ENCODE measurements at regions of chr22 and their contacts with region 1.

Region 1: DNA sequence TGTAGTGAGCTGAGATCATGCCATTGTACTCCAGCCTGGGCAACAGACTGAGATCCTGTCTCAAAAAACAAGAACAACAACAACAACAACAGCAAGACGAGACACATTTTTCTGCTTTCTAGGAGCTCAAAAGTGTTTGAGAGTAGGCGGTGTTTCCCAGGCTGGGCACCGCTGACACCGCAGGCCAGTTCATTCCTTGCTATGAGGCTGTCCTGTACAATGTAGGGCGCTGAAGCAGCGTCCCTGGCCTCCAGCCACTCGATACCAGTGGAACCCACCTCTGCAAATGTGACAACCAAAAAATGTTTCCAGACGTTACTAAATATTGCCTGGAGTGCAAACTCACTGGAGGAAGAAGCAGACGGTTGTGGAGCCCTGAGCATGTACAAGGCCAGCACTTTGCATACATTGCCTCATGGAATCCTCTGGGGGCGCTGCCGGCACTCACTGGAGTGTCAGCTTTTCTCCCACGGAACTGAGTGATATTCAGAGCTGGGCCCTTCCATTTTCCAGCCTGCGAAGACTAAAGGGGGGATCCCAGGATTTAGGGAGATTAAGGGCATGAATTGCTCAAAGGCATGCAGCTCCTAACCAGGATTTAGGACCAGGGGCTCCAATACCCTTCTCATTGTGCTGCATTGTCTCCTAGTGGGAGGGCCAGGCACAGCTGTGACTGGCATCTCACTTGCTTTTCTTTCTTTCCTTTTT is 5.8 kb upstream of the MIEF1 start:
- DNase-seq: peak in 1 of 2 donors; percentile 65
- ATAC-seq: peak in 1 of 2 donors; percentile 79
- H3K4me3 ChIP-seq: no peak overlapping the region
- H3K27ac ChIP-seq: peak overlapping the region in 2 of 4 donors; percentile 41 to 48
- H3K4me1 ChIP-seq: peaks cover 3 to 27% of the 10 kb centered on the region in 2 donors
- H3K27me3 ChIP-seq: no peaks in the 10 kb centered on the region
- CTCF ChIP-seq: peak; percentile 41 to 77 (median 59)
- POLR2A ChIP-seq: no peak

Region 2: DNA sequence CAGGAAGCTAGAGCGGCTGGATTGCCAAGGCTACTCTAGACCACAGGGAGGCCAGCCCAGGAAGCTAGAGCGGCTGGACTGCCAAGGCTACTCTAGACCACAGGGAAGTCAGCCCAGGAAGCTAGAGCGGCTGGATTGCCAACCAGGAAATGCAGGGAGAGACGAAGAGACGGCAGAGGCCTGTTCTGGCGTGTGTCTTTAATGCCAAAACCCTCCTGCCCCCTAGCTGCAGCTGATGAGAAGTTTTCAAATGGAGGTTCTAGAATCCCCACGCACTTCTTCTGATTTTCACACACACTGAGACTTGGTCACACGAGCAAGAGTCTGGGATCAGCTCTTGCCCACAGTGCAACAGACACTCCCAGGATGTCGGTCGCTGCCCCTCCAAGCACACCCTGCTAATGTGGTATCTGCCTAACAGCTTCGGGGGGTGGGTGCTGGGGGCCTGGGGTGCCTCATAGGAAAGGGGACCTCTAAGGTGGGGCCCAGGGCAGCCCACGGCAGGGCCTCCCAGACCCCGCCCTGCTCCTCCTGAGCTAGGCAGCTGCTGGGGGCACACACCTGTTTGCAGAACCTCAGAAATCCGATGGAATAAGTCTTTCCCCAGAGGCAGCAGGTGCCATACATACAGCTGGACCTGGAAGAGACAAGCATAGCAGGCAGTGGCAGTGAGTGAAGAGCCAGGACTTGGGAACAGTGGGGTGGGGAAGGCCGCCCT is 1266.0 kb before region 1 on chr22:
- in situ Hi-C with region 1: no loop called
- intact Hi-C with region 1: loop called (anchors 5 kb)
- DNase-seq: no peak
- ATAC-seq: peak in 1 of 2 donors; percentile 16
- H3K4me3 ChIP-seq: no peak overlapping the region
- H3K27ac ChIP-seq: peak overlapping the region; percentile 5 to 66 (median 60)
- H3K4me1 ChIP-seq: peaks cover 28 to 38% of the 10 kb centered on the region in 2 donors
- H3K27me3 ChIP-seq: no peaks in the 10 kb centered on the region
- CTCF ChIP-seq: peak in 3 of 5 experiments; percentile 29 to 34 (median 31)
- POLR2A ChIP-seq: no peak

Region 3: DNA sequence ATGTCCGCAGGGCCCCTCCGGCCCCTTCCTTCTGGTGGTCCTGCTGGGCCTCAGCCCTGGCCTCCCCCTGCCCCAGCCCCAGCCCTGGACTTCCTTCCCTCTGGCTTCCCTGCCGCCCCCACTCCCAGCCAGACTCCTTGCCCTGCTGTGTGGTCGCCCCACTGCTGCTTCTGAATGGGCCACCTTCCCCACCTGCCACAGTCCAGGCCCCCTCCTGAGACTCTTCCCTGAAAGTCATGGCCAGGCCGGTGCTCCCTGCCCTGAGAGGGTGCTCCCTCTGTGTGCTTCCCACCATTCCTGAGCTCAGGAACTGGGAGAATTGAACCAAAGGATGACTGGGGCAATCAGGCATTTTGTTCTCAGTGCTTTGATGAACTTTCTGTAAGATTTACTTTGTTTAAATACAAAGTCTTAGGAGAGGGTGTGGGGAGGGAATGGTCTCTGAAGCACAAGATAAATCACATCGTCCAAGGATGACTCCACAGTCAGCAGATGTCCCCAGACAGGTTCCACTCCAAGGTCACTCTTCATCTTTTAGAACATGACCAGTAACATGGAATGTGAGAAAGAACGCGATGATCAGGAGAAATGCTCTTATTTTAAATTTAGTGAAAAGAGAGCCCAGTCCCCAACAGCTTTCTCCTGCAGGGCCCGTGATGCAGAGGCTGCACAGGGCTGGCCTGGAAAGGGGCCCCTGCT is 474.6 kb before region 1 on chr22:
- in situ Hi-C with region 1: no loop called
- intact Hi-C with region 1: no loop called
- DNase-seq: no peak
- ATAC-seq: no peak
- H3K4me3 ChIP-seq: peak overlapping the region; percentile 40 to 49 (median 48)
- H3K27ac ChIP-seq: peak overlapping the region; percentile 52 to 73 (median 66)
- H3K4me1 ChIP-seq: no peaks in the 10 kb centered on the region
- H3K27me3 ChIP-seq: no peaks in the 10 kb centered on the region
- CTCF ChIP-seq: no peak
- POLR2A ChIP-seq: no peak

Measured in gastrocnemius medialis (tissue), 4 donors.